A549 (cell line): ENCODE measurements at regions of chr9 and their contacts with region 1.

Region 1: GRCh38 chr9:25964239-25964638 is 286.0 kb upstream of the TUSC1 start:
- DNase-seq: peak; percentile 8 to 82
- ATAC-seq: peak; percentile 78 to 91; a peak in 5 of 6 replicates
- H3K4me3 ChIP-seq: no peak overlapping the region
- H3K27ac ChIP-seq: peak overlapping the region; percentile 36 to 75; a peak in 4 of 6 replicates
- H3K4me1 ChIP-seq: no peaks in the 10 kb centered on the region
- CTCF ChIP-seq: peak; percentile 54
- EP300 ChIP-seq: no peak
- POLR2A ChIP-seq: no peak
- RAD21 ChIP-seq: peak; percentile 77 to 89

Region 2: DNA sequence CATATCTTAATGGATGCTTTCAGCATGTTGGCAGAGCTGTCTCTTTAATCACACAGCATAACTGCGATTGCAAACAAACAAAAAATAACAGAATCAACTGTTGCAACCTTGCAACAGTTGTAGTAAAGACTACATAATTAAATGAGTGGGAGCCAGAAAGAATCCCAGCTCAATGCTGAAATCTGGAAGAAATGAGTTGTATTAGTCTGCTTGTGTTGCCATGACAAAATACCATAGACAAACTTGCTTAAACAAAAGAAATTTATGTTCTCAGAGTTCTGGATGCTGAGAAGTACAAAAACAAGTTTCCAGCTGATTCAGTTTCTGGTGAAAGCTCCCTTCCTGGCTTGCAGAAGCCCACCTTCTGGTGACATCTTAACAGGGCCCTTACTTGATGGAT is 25.1 kb before region 1 on chr9:
- CTCF ChIA-PET with region 1: no interaction called
- POLR2A ChIA-PET with region 1: no interaction called
- DNase-seq: no peak
- ATAC-seq: no peak
- H3K4me3 ChIP-seq: no peak overlapping the region
- H3K27ac ChIP-seq: no peak overlapping the region
- H3K4me1 ChIP-seq: no peaks in the 10 kb centered on the region
- CTCF ChIP-seq: no peak
- EP300 ChIP-seq: no peak
- POLR2A ChIP-seq: no peak
- RAD21 ChIP-seq: no peak

Region 3: DNA sequence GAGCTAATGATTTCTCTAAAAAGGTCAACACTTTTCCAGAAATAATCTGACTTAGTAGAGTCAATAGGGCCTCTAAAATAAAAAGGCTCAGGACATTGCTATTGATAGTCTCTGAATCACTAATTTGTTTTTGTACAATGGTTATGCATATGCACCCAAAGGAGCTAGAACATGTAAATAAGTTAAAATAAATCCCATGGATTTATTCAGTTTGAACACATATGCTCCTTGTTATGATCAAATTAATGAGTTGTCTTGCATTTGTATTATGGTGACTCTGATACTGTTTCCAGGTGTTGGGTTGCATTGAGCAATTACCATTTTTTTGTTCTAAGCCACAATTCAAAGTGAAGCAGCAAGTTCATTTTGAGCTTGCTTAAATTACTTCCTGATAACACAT is 10.0 kb before region 1 on chr9:
- CTCF ChIA-PET with region 1: no interaction called
- POLR2A ChIA-PET with region 1: no interaction called
- DNase-seq: no peak
- ATAC-seq: no peak
- H3K4me3 ChIP-seq: no peak overlapping the region
- H3K27ac ChIP-seq: no peak overlapping the region
- H3K4me1 ChIP-seq: no peaks in the 10 kb centered on the region
- CTCF ChIP-seq: no peak
- EP300 ChIP-seq: no peak
- POLR2A ChIP-seq: no peak
- RAD21 ChIP-seq: no peak

Region 4: GRCh38 chr9:26193237-26193636 is 229.0 kb after region 1 on chr9:
- CTCF ChIA-PET with region 1: no interaction called
- POLR2A ChIA-PET with region 1: no interaction called
- DNase-seq: no peak
- ATAC-seq: no peak
- H3K4me3 ChIP-seq: no peak overlapping the region
- H3K27ac ChIP-seq: no peak overlapping the region
- H3K4me1 ChIP-seq: no peaks in the 10 kb centered on the region
- CTCF ChIP-seq: no peak
- EP300 ChIP-seq: no peak
- POLR2A ChIP-seq: no peak
- RAD21 ChIP-seq: no peak

Region 5: DNA sequence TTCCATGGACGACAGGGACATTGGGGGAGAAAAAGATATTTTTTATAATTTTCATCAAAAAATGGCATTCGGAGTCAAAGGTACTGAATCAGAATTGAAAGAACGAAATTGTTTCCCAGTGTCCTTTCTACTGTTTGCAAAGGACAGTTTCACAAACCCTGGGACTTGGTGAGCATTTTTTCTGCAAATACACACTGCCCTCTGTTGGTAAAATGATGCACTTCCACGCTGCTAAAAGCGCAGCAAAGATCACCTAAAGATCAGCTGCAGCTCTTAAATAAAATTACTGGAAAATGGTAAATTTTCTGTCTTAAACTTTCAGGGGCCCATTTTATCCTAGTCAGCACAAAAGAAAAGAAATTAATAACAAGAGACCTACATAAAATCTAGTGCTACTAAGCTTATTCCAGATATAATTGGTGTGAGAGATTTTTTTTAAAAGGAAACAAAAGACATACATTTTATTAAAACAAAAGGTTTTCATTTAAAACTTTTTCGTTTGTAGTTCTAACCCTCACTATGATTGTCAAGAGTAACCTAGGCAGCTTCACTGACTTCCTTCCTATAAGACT is 362.3 kb after region 1 on chr9:
- CTCF ChIA-PET with region 1: interaction called, 24 read pairs
- POLR2A ChIA-PET with region 1: no interaction called
- DNase-seq: peak; percentile 6 to 72
- ATAC-seq: peak; percentile 68 to 82
- H3K4me3 ChIP-seq: no peak overlapping the region
- H3K27ac ChIP-seq: peak overlapping the region; percentile 55 to 68; a peak in 5 of 6 replicates
- H3K4me1 ChIP-seq: peaks cover 5% of the 10 kb centered on the region; the same call in 1 of the 3 replicates
- CTCF ChIP-seq: peak; percentile 76
- EP300 ChIP-seq: no peak
- POLR2A ChIP-seq: no peak
- RAD21 ChIP-seq: peak; percentile 89 to 90